ENCODE measurements at regions of chr9 and their contacts with region 1.

Region 1: GRCh38 chr9:109469646-109470358 is 28.3 kb downstream of the PTPN3 start:
- DNase-seq: peak; percentile 71
- ATAC-seq: peak; percentile 96
- H3K4me3 ChIP-seq: peak overlapping the region; percentile 18 to 19; a peak in 3 of 4 replicates
- H3K27ac ChIP-seq: peak overlapping the region; percentile 65
- H3K4me1 ChIP-seq: peaks cover 23% of the 10 kb centered on the region
- H3K27me3 ChIP-seq: no peaks in the 10 kb centered on the region
- CTCF ChIP-seq: peak; percentile 91

Region 2: GRCh38 chr9:109344866-109345265 is 124.9 kb before region 1 on chr9:
- CTCF ChIA-PET with region 1: interaction called, 11 read pairs
- POLR2A ChIA-PET with region 1: no interaction called
- in situ Hi-C with region 1: no loop called
- intact Hi-C with region 1: no loop called
- DNase-seq: no peak
- ATAC-seq: no peak
- H3K4me3 ChIP-seq: no peak overlapping the region
- H3K27ac ChIP-seq: no peak overlapping the region
- H3K4me1 ChIP-seq: no peaks in the 10 kb centered on the region; the same call in 1 of the 2 replicates
- H3K27me3 ChIP-seq: no peaks in the 10 kb centered on the region
- CTCF ChIP-seq: no peak

Region 3: GRCh38 chr9:109440797-109441287 is 29.0 kb before region 1 on chr9:
- CTCF ChIA-PET with region 1: interaction called, 20 read pairs
- POLR2A ChIA-PET with region 1: no interaction called
- in situ Hi-C with region 1: no loop called
- intact Hi-C with region 1: no loop called
- DNase-seq: peak; percentile 51
- ATAC-seq: peak; percentile 91
- H3K4me3 ChIP-seq: no peak overlapping the region
- H3K27ac ChIP-seq: no peak overlapping the region
- H3K4me1 ChIP-seq: no peaks in the 10 kb centered on the region
- H3K27me3 ChIP-seq: no peaks in the 10 kb centered on the region
- CTCF ChIP-seq: peak; percentile 80

Region 4: DNA sequence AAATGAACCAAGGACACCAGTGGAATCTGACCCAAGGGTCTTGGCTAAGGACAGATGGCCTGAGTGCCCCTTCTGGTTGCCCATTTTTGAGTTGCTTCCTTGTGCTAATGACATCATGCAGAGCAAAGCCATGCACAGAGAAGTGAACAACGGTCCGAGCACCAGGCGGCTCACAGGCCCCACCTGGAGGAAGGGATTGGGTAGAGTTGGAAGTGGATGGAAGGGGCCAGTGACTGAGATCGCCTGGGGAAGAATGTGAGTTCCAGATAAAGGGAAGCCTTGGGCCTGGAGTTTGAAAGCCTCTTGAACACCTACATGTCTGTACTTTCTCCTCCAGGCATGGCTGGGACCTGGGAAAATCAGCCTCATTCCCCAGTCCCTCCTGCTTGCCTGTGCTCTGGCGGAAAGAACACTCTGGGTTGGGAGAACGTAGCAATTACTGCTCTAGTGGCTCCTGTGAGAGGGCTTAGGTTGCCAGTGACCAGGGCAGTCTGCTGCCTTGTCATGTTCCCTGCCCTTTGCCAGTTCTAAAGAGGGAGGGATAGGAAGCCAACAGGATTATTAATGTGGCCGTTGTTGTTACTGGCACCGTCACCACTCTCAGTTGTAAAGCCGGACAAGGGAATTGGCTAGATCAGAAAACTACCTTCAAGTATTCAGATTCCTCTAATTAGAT is 90.8 kb after region 1 on chr9:
- CTCF ChIA-PET with region 1: no interaction called
- POLR2A ChIA-PET with region 1: no interaction called
- in situ Hi-C with region 1: no loop called
- intact Hi-C with region 1: no loop called
- DNase-seq: no peak
- ATAC-seq: no peak
- H3K4me3 ChIP-seq: no peak overlapping the region
- H3K27ac ChIP-seq: no peak overlapping the region
- H3K4me1 ChIP-seq: no peaks in the 10 kb centered on the region
- H3K27me3 ChIP-seq: no peaks in the 10 kb centered on the region
- CTCF ChIP-seq: 0 out of 2 replicates have a peak, but pooled peaks have one; percentile 12

Measured in Panc1 (cell line).